Spleen (tissue), 13 donors: ENCODE measurements at regions of chr2 and their contacts with region 1.

Region 1: DNA sequence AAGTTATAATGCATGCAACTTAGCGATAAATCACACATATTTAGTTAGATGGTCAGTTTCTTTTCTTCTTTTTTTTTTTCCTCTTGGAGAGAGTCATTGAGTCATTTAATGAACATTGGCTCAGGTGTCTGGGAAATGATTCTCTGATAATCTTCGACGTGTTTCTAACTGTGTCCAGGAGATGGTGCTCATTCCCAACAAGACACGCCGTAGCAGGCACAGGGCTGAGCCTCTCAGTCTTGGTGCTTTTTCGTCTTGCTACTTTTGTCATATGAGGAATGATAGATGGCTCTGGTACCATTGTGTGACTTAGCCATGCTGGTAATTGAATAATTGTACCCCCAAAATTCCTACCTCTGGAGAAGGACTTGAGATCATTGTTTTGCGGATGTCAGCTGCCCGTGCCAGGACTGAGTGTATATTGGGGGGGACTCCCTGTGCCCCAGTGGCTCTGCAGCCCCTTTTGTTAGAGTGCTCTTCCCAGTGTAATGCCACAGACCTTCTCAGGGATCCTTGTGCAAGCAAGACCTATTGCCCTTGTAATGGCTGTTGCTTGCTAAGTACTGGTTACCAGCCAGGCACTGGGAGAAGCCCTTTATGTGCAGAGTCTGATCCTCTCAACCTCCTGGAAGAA is 107.6 kb upstream of the CYRIA start:
- DNase-seq: no peak
- H3K4me3 ChIP-seq: no peak overlapping the region
- H3K27ac ChIP-seq: no peak overlapping the region
- H3K4me1 ChIP-seq: no peaks in the 10 kb centered on the region
- H3K27me3 ChIP-seq: peaks cover 0 to 20% (median 0%) of the 10 kb centered on the region in 7 donors
- CTCF ChIP-seq: peak in 7 of 11 experiments; percentile 25 to 57 (median 45)
- POLR2A ChIP-seq: no peak

Region 2: DNA sequence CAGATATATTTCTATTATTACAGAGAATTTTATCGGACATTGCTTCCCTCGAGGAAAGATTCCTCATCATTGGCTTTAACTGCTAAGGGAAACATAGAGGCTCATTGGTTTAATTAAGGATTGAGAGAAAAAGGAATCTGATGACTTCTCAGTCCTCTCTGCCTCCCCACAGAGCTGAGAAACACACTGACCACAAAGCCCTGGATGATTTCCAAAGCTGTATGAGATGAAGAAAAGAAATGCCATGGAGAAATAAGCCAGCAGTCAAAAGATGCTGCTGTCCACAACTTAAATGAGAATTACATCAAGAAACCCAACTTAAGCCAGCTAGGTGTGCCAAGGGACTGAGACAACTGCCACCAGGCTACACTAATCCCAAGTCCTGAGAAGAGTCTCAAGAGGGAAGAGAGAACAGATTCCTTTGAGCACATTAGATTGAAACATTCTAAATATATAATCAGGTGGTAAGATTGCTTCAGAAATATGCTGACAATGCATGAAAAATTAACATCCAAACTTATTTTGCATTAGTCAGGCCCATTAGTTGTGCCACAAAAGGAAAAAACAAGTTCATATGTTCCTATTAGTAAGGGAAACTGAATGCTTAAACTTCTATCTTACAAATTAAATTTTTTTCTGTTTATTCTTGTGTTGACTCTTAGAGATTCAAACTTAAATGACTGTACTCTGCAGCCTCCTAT is 200.5 kb after region 1 on chr2:
- intact Hi-C with region 1: no loop called
- DNase-seq: no peak
- H3K4me3 ChIP-seq: no peak overlapping the region
- H3K27ac ChIP-seq: no peak overlapping the region
- H3K4me1 ChIP-seq: no peaks in the 10 kb centered on the region
- H3K27me3 ChIP-seq: no peaks in the 10 kb centered on the region
- CTCF ChIP-seq: no peak
- POLR2A ChIP-seq: no peak

Region 3: GRCh38 chr2:17309741-17310339 is 536.6 kb after region 1 on chr2:
- intact Hi-C with region 1: loop called (anchors 5 kb)
- DNase-seq: no peak
- H3K4me3 ChIP-seq: no peak overlapping the region
- H3K27ac ChIP-seq: no peak overlapping the region
- H3K4me1 ChIP-seq: no peaks in the 10 kb centered on the region
- H3K27me3 ChIP-seq: no peaks in the 10 kb centered on the region
- CTCF ChIP-seq: peak in 9 of 11 experiments; percentile 29 to 66 (median 53)
- POLR2A ChIP-seq: no peak

Region 4: DNA sequence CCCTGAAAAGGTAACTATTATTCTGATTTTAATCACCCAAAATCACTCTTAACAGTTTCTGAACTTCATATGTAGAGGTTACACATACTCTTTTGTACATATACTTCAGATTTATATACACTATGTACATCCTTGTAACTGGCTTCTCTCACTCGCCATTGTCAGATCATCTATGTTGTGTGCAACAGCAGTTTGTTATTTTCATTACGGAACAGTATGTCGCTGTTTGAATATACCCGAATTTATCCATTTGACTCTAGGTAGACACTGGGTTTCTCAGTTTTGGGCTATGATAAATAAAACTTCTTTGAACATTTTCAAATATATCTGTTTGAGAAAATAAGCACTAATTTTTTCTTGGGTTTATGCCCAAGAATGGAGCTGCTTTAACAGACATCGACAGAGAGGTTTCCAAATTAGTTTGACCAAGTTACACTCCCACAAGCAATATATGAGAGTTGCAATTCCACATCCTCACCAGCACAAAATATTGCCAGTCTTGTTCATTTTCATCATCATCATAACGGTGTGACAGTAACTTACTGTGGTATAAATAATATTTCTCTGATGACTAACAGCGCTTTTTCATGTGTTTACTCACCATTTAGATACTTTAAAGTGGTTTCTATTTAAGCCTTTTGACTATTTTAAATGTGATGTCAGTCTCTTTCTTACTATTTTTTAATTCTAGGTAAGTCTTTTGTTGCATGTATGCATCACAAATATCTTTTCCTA is 899.6 kb after region 1 on chr2:
- intact Hi-C with region 1: loop called (anchors 10 kb)
- DNase-seq: no peak
- H3K4me3 ChIP-seq: no peak overlapping the region
- H3K27ac ChIP-seq: no peak overlapping the region
- H3K4me1 ChIP-seq: no peaks in the 10 kb centered on the region
- H3K27me3 ChIP-seq: no peaks in the 10 kb centered on the region
- CTCF ChIP-seq: no peak
- POLR2A ChIP-seq: no peak